ENCODE measurements at regions of chr11 and their contacts with region 1.

Region 1: GRCh38 chr11:33773987-33774735 is at the start of gene FBXO3:
- DNase-seq: peak; percentile 73 to 93 (median 88)
- ATAC-seq: peak; percentile 89
- H3K4me3 ChIP-seq: peak within 1 kb of the TSS; percentile 91 to 96
- H3K4me3 Mint-ChIP-seq: peak within 1 kb of the TSS; percentile 98
- H3K27ac ChIP-seq: peak within 1 kb of the TSS; percentile 71 to 80
- H3K27ac Mint-ChIP-seq: peak within 1 kb of the TSS; percentile 96
- H3K4me1 ChIP-seq: peaks cover 29% of the 10 kb centered on the region
- H3K4me1 Mint-ChIP-seq: peaks cover 49% of the 10 kb centered on the region
- H3K27me3 ChIP-seq: peaks cover 2 to 10% of the 10 kb centered on the region in 2 experiments
- H3K27me3 Mint-ChIP-seq: peaks cover 8% of the 10 kb centered on the region
- CTCF ChIP-seq: no peak
- total RNA-seq, gene FBXO3: 54.8 to 55.4 TPM

Region 2: GRCh38 chr11:32893343-32894148 is 880.6 kb before region 1 on chr11:
- CTCF ChIA-PET with region 1: no interaction called
- POLR2A ChIA-PET with region 1: no interaction called
- intact Hi-C with region 1: loop called (anchors 2 to 10 kb)
- DNase-seq: peak in 8 of 9 experiments; percentile 21 to 75 (median 54)
- ATAC-seq: peak; percentile 50
- H3K4me3 ChIP-seq: peak overlapping the region; percentile 79 to 87
- H3K4me3 Mint-ChIP-seq: peak overlapping the region; percentile 92
- H3K27ac ChIP-seq: peak overlapping the region; percentile 36 to 51
- H3K27ac Mint-ChIP-seq: peak overlapping the region; percentile 74
- H3K4me1 ChIP-seq: peaks cover 27% of the 10 kb centered on the region
- H3K4me1 Mint-ChIP-seq: peaks cover 33% of the 10 kb centered on the region
- H3K27me3 ChIP-seq: no peaks in the 10 kb centered on the region
- H3K27me3 Mint-ChIP-seq: no peaks in the 10 kb centered on the region
- CTCF ChIP-seq: peak; percentile 35

Region 3: DNA sequence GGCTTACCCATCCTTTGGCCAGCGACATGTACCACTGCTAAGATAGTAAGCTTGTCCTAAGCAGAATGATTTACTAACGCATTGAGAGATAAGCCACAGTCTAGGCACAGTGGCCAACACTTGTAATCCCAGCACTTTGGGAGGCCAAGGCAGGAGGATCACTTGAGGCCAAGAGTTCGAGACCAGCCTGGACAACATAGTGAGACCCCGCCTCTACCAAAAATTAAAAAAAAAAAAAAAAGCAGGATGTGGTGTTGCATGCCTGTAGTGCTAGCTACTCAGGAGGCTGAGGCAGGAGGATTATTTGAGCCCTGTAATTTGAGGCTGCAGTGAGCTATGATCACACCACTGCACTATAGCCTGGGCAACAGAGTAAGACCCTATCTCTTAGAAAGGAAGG is 423.9 kb before region 1 on chr11:
- CTCF ChIA-PET with region 1: no interaction called
- POLR2A ChIA-PET with region 1: no interaction called
- intact Hi-C with region 1: no loop called
- DNase-seq: no peak
- ATAC-seq: no peak
- H3K4me3 ChIP-seq: no peak overlapping the region
- H3K4me3 Mint-ChIP-seq: no peak overlapping the region
- H3K27ac ChIP-seq: no peak overlapping the region
- H3K27ac Mint-ChIP-seq: peak overlapping the region; percentile 50
- H3K4me1 ChIP-seq: no peaks in the 10 kb centered on the region
- H3K4me1 Mint-ChIP-seq: no peaks in the 10 kb centered on the region
- H3K27me3 ChIP-seq: no peaks in the 10 kb centered on the region
- H3K27me3 Mint-ChIP-seq: no peaks in the 10 kb centered on the region
- CTCF ChIP-seq: no peak

Region 4: GRCh38 chr11:33700425-33701271 is 73.5 kb before region 1 on chr11 and contains the start of gene C11orf91:
- CTCF ChIA-PET with region 1: no interaction called
- POLR2A ChIA-PET with region 1: interaction called, 3 read pairs
- intact Hi-C with region 1: loop called (anchors 1 kb)
- DNase-seq: peak; percentile 88 to 96 (median 94)
- ATAC-seq: peak; percentile 95
- H3K4me3 ChIP-seq: peak within 1 kb of the TSS; percentile 51 to 68
- H3K4me3 Mint-ChIP-seq: peak within 1 kb of the TSS; percentile 92
- H3K27ac ChIP-seq: no peak within 1 kb of the TSS
- H3K27ac Mint-ChIP-seq: peak within 1 kb of the TSS; percentile 64
- H3K4me1 ChIP-seq: peaks cover 13% of the 10 kb centered on the region
- H3K4me1 Mint-ChIP-seq: peaks cover 25% of the 10 kb centered on the region
- H3K27me3 ChIP-seq: no peaks in the 10 kb centered on the region
- H3K27me3 Mint-ChIP-seq: peaks cover 2% of the 10 kb centered on the region
- CTCF ChIP-seq: no peak
- total RNA-seq, gene C11orf91: 0.54 TPM in 1 of 2 experiments, not detected in the other

Region 5: GRCh38 chr11:33753304-33753967 is 20.7 kb before region 1 on chr11:
- CTCF ChIA-PET with region 1: no interaction called
- POLR2A ChIA-PET with region 1: interaction called, 5 read pairs
- intact Hi-C with region 1: loop called in 1 of 2 experiments (anchors 2 kb)
- DNase-seq: no peak
- ATAC-seq: no peak
- H3K4me3 ChIP-seq: no peak overlapping the region
- H3K4me3 Mint-ChIP-seq: no peak overlapping the region
- H3K27ac ChIP-seq: no peak overlapping the region
- H3K27ac Mint-ChIP-seq: no peak overlapping the region
- H3K4me1 ChIP-seq: no peaks in the 10 kb centered on the region
- H3K4me1 Mint-ChIP-seq: no peaks in the 10 kb centered on the region
- H3K27me3 ChIP-seq: no peaks in the 10 kb centered on the region
- H3K27me3 Mint-ChIP-seq: no peaks in the 10 kb centered on the region
- CTCF ChIP-seq: no peak

Region 6: DNA sequence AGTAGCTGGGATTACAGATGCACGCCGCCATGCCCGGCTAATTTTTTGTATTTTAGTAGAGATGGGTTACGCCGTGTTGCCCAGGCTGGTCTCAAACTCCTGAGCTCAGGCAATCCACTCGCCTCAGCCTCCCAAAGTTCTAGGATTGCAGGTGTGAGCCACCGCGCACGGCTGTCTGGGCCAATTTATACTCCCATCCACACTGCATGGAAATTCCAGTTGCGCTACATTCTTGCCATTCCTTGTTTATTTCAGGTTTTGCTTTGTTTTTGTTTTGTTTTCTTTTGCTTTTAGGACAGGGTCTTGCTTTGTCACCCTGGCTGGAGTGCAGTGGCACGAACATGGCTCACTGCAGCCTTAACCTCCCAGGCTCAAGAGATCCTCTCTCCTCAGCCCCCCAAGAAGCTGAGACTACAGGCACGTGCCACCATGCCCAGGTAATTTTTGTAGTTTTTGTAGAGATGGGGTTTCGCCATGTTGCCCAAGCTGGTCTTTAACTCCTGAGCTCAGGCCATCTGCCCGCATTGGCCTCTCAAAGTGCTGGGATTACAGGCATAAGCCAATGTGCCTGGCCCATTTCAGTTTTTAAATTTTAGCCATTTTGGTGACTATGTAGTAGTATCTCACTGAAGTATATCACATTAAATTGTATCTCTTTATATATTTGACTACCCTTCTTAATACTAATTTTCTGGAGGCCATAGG is 266.6 kb after region 1 on chr11:
- CTCF ChIA-PET with region 1: no interaction called
- POLR2A ChIA-PET with region 1: no interaction called
- intact Hi-C with region 1: no loop called
- DNase-seq: no peak
- ATAC-seq: no peak
- H3K4me3 ChIP-seq: no peak overlapping the region
- H3K4me3 Mint-ChIP-seq: no peak overlapping the region
- H3K27ac ChIP-seq: no peak overlapping the region
- H3K27ac Mint-ChIP-seq: no peak overlapping the region
- H3K4me1 ChIP-seq: no peaks in the 10 kb centered on the region
- H3K4me1 Mint-ChIP-seq: peaks cover 3% of the 10 kb centered on the region
- H3K27me3 ChIP-seq: no peaks in the 10 kb centered on the region
- H3K27me3 Mint-ChIP-seq: peaks cover 5% of the 10 kb centered on the region
- CTCF ChIP-seq: no peak

Region 7: GRCh38 chr11:34105079-34105956 is 331.2 kb after region 1 on chr11 and contains the start of gene NAT10:
- CTCF ChIA-PET with region 1: no interaction called
- POLR2A ChIA-PET with region 1: interaction called, 4 read pairs
- intact Hi-C with region 1: loop called (anchors 2 to 5 kb)
- DNase-seq: peak; percentile 93 to 100 (median 98)
- ATAC-seq: peak; percentile 93
- H3K4me3 ChIP-seq: peak within 1 kb of the TSS; percentile 70 to 94
- H3K4me3 Mint-ChIP-seq: peak within 1 kb of the TSS; percentile 97
- H3K27ac ChIP-seq: peak within 1 kb of the TSS; percentile 81 to 90
- H3K27ac Mint-ChIP-seq: peak within 1 kb of the TSS; percentile 99
- H3K4me1 ChIP-seq: peaks cover 27% of the 10 kb centered on the region
- H3K4me1 Mint-ChIP-seq: peaks cover 60% of the 10 kb centered on the region
- H3K27me3 ChIP-seq: no peaks in the 10 kb centered on the region
- H3K27me3 Mint-ChIP-seq: no peaks in the 10 kb centered on the region
- CTCF ChIP-seq: no peak
- total RNA-seq, gene NAT10: 51.1 to 59.6 TPM

Region 8: DNA sequence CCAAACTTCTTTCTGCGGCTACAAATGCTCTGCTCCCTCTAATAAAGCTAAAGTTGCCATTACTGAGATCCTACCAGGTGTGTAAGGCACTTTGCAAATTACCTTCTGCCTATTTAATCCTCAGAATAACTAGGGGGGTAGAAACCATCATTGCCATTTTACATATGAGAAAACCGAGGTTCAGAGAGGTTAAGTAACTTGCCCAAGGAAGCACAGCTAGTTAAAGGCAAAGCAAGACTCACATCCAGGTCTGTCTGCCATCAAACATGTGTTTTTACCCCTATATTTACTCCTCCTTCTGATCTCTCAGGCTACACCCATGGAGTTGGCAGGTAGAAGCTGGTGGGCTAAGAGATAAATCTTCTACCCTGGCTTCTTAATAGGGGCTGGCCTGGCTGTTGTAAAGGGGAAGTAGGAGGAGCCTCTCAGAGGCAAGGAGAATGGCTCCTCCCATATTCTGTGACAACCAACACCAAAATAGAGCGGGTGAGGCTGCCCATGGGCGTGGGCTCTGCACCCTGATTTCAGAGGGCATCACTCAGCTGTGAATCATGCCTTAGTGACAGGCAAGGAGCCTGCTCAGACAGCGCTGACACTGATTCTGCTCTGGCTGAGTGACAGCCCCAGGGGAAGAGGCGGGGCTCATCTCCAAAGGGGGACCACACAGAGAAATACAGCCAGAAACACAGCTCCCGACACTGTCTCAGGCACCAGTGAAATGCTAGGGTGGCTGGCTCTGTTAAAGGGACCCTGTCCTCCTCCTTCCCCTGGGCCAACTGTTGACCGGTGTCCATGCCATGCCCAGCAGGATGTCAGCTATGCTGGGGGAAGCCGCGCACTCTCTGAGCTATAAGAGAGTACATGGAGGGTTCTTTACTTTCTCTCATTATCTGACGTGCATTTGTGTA is 476.8 kb after region 1 on chr11:
- CTCF ChIA-PET with region 1: no interaction called
- POLR2A ChIA-PET with region 1: no interaction called
- intact Hi-C with region 1: loop called in 1 of 2 experiments (anchors 10 kb)
- DNase-seq: peak; percentile 33 to 90 (median 79)
- ATAC-seq: peak; percentile 94
- H3K4me3 ChIP-seq: peak overlapping the region; percentile 1 to 47
- H3K4me3 Mint-ChIP-seq: peak overlapping the region; percentile 66
- H3K27ac ChIP-seq: no peak overlapping the region
- H3K27ac Mint-ChIP-seq: peak overlapping the region; percentile 84
- H3K4me1 ChIP-seq: peaks cover 51% of the 10 kb centered on the region
- H3K4me1 Mint-ChIP-seq: peaks cover 54% of the 10 kb centered on the region
- H3K27me3 ChIP-seq: no peaks in the 10 kb centered on the region
- H3K27me3 Mint-ChIP-seq: peaks cover 3% of the 10 kb centered on the region
- CTCF ChIP-seq: no peak

Region 9: DNA sequence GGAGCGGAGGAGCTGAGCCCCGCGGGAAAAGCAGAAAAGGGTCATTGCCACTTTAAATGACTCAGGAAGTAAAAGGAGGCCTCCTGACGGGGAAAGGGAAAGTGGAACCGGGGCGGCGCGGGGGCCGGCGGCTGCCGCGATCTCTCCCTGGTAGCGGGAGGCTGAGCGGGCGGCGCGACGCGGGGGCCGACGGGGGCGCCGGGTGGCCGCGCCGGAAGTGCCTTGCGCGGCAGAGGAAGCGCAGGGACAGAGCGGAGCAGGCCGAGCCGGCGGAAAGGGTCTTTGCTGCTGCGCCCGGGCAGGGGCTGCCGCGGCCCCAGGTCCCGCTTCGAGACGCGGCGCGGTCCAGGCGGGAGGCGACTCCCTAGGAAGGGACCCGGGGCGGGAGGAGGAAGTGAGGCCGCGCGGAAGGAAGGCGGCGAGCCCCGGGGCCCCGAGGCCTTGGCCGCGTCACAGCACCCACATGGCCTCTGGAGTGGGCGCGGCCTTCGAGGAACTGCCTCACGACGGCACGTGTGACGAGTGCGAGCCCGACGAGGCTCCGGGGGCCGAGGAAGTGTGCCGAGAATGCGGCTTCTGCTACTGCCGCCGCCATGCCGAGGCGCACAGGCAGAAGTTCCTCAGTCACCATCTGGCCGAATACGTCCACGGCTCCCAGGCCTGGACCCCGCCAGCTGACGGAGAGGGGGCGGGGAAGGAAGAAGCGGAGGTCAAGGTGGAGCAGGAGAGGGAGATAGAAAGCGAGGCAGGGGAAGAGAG is 1888.7 kb after region 1 on chr11 and contains the start of gene TRIM44:
- CTCF ChIA-PET with region 1: no interaction called
- POLR2A ChIA-PET with region 1: no interaction called
- intact Hi-C with region 1: loop called in 1 of 2 experiments (anchors 10 kb)
- DNase-seq: peak; percentile 57 to 89 (median 79)
- ATAC-seq: peak; percentile 81
- H3K4me3 ChIP-seq: peak within 1 kb of the TSS; percentile 91 to 97
- H3K4me3 Mint-ChIP-seq: peak within 1 kb of the TSS; percentile 96
- H3K27ac ChIP-seq: peak within 1 kb of the TSS; percentile 84 to 85
- H3K27ac Mint-ChIP-seq: peak within 1 kb of the TSS; percentile 97
- H3K4me1 ChIP-seq: peaks cover 23% of the 10 kb centered on the region
- H3K4me1 Mint-ChIP-seq: peaks cover 47% of the 10 kb centered on the region
- H3K27me3 ChIP-seq: peaks cover 0 to 4% of the 10 kb centered on the region in 2 experiments
- H3K27me3 Mint-ChIP-seq: no peaks in the 10 kb centered on the region
- CTCF ChIP-seq: no peak
- total RNA-seq, gene TRIM44: 25.7 to 29.5 TPM

Measured in CD8-positive, alpha-beta T cell (primary cell).